ENCODE measurements at regions of chr9 and their contacts with region 1.

Region 1: DNA sequence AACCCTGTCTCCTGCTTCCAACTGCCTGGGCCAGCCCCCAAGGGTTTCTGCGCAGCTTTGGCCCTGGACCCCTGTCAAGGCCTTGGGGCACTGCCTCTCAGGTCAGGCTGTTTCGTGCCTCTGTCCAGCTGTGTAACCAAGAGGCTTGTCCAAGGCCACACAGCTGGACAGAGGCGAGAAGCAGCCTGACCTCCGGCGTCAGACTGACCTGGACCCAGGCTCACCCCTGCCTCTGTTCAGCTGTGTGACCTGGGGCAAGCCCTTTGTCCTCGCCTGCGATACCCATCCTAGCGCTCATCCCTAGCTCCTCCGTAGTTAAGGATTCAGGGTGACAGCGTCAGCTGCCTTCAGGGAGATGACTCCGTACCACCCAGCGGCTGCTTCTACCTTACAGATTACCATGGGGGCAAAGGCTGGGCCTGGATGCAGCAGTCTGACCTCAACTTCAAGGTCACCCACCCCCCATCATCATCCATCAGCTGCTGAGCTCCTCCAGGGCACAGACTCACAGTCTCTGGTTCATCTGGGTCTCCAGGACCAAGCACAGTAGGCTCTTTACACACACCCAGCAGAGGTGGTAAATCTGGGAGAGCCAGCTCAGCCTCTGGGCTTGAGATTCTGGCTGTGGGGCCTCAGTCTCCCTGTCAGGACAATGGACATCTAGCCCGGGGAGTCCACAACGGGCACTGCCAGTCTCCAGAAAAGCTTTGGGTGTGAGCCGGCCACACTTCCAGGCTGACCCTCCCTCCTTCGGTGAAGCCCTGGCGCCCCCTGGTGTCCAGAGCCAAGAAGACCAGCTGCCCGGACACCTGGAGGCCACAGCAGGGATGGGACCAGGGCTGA is 7.9 kb downstream of the AK1 start:
- DNase-seq: peak; percentile 61 to 76 (median 63)
- H3K4me3 ChIP-seq: no peak overlapping the region
- H3K4me3 Mint-ChIP-seq: no peak overlapping the region
- H3K27ac ChIP-seq: no peak overlapping the region
- H3K27ac Mint-ChIP-seq: peak overlapping the region in 2 of 7 donors; percentile 31 to 53
- H3K4me1 ChIP-seq: peaks cover 20% of the 10 kb centered on the region
- H3K4me1 Mint-ChIP-seq: peaks cover 13 to 20% (median 15%) of the 10 kb centered on the region in 4 donors
- H3K27me3 ChIP-seq: no peaks in the 10 kb centered on the region
- H3K27me3 Mint-ChIP-seq: no peaks in the 10 kb centered on the region

Region 2: GRCh38 chr9:127742435-127743088 is 127.0 kb before region 1 on chr9:
- CTCF ChIA-PET with region 1: interaction called, 19 read pairs
- POLR2A ChIA-PET with region 1: interaction called, 4 read pairs
- intact Hi-C with region 1: no loop called
- DNase-seq: no peak
- H3K4me3 ChIP-seq: no peak overlapping the region
- H3K4me3 Mint-ChIP-seq: no peak overlapping the region
- H3K27ac ChIP-seq: no peak overlapping the region
- H3K27ac Mint-ChIP-seq: peak overlapping the region in 2 of 7 donors; percentile 29 to 42
- H3K4me1 ChIP-seq: no peaks in the 10 kb centered on the region
- H3K4me1 Mint-ChIP-seq: peaks cover 0 to 7% (median 4%) of the 10 kb centered on the region in 4 donors
- H3K27me3 ChIP-seq: no peaks in the 10 kb centered on the region
- H3K27me3 Mint-ChIP-seq: no peaks in the 10 kb centered on the region

Region 3: DNA sequence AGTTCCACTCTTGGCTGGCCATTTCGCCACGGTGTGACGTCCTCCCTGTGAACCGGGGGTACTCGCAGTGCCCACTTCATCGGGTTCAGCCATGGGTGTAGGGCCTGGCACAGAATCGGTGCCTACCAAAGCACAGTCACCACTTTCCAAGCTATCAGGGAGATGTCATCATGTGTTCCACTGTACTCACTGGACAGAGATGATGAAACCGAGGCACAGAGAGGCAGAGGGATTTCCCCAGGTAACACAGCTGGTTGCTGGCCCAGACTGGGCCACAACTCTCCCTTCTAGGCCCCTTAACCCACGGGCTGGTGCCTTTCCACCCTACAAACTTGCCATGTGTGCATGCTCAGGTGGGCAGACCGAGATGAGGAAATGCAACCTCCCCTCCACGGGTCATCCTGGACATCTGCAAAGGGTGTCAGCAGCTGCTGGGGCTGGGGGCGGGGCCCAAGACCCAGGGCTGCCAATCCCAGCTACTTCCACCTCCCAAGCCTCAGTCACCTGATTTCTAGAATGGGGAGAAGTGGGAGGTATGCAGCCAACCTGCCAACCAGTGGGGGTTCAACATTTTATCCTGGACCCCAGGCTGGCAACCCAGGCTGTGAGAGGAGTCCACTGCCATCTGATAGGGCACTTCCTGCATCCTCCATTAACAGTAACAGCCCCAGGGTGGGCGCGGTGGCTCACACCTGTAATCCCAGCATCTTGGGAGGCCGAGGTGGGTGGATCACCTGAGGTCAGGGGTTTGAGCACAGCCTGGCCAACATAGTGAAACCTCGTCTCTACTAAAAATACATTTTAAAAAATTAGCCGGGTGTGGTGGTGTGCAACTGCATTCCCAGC is 90.2 kb before region 1 on chr9:
- CTCF ChIA-PET with region 1: interaction called, 22 read pairs
- POLR2A ChIA-PET with region 1: interaction called, 27 read pairs
- intact Hi-C with region 1: no loop called
- DNase-seq: peak in 1 of 5 donors; percentile 86
- H3K4me3 ChIP-seq: peak overlapping the region; percentile 49 to 63
- H3K4me3 Mint-ChIP-seq: peak overlapping the region; percentile 83 to 100 (median 100)
- H3K27ac ChIP-seq: peak overlapping the region; percentile 91
- H3K27ac Mint-ChIP-seq: peak overlapping the region; percentile 96 to 98 (median 97)
- H3K4me1 ChIP-seq: peaks cover 80% of the 10 kb centered on the region
- H3K4me1 Mint-ChIP-seq: peaks cover 29 to 84% (median 61%) of the 10 kb centered on the region in 4 donors
- H3K27me3 ChIP-seq: no peaks in the 10 kb centered on the region
- H3K27me3 Mint-ChIP-seq: no peaks in the 10 kb centered on the region

Region 4: GRCh38 chr9:127854184-127854806 is 15.2 kb before region 1 on chr9 and contains the start of gene ENG:
- CTCF ChIA-PET with region 1: interaction called, 21 read pairs
- POLR2A ChIA-PET with region 1: interaction called, 6 read pairs
- intact Hi-C with region 1: no loop called
- DNase-seq: peak in 1 of 5 donors; percentile 21
- H3K4me3 ChIP-seq: peak within 1 kb of the TSS; percentile 21 to 54
- H3K4me3 Mint-ChIP-seq: peak within 1 kb of the TSS; percentile 85 to 90 (median 88)
- H3K27ac ChIP-seq: peak within 1 kb of the TSS; percentile 51
- H3K27ac Mint-ChIP-seq: peak within 1 kb of the TSS; percentile 57 to 94 (median 92)
- H3K4me1 ChIP-seq: peaks cover 33% of the 10 kb centered on the region
- H3K4me1 Mint-ChIP-seq: peaks cover 6 to 39% (median 26%) of the 10 kb centered on the region in 4 donors
- H3K27me3 ChIP-seq: no peaks in the 10 kb centered on the region
- H3K27me3 Mint-ChIP-seq: peaks cover 0 to 2% of the 10 kb centered on the region in 2 donors
- total RNA-seq, gene ENG: 13.7 to 13.8 TPM

Region 5: GRCh38 chr9:127905004-127905728 is 35.6 kb after region 1 on chr9:
- CTCF ChIA-PET with region 1: interaction called, 12 read pairs
- POLR2A ChIA-PET with region 1: interaction called, 6 read pairs
- intact Hi-C with region 1: no loop called
- DNase-seq: peak; percentile 59 to 89 (median 61)
- H3K4me3 ChIP-seq: peak overlapping the region; percentile 82 to 85
- H3K4me3 Mint-ChIP-seq: peak overlapping the region; percentile 86 to 99 (median 95)
- H3K27ac ChIP-seq: peak overlapping the region; percentile 100
- H3K27ac Mint-ChIP-seq: peak overlapping the region; percentile 98 to 100 (median 100)
- H3K4me1 ChIP-seq: peaks cover 67% of the 10 kb centered on the region
- H3K4me1 Mint-ChIP-seq: peaks cover 16 to 60% (median 31%) of the 10 kb centered on the region in 4 donors
- H3K27me3 ChIP-seq: no peaks in the 10 kb centered on the region
- H3K27me3 Mint-ChIP-seq: no peaks in the 10 kb centered on the region

Measured in CD4-positive, alpha-beta memory T cell (primary cell).